ENCODE measurements at regions of chr19 and their contacts with region 1.

Region 1: DNA sequence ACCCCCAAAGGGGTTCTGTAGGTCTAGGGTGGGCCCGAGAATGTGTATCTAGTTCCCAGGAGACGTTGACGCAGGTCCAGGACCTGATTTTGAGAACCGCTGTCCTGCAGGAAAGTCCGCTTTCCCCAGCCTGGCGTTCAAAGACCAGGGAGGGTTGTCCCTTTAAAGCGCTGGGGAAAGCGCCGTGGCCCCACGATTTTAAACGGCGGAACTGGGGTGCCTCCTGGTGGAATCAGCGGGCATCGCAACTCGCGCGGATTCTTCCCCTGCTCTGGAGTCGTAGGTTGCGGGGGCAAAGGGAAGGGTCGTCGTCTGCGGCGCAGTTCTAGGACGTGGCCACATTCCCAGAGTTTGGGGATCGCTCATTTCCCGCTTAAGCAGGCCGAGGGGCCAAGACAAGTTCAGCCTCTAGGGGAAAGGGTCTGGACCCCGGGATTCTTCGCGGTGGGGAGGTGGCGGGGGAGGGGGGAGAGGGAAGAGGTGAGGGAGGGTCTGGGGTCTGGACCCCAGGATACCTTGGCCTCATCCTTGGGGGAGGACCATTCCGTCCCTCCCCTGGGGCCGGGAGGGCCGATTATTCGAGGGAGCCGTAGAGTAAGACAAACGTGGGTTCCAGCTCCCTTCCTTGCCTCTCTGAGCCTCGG is 7.7 kb downstream of the PNMA8B start:
- DNase-seq: peak; percentile 43 to 54 (median 44)
- H3K4me3 ChIP-seq: no peak overlapping the region
- H3K4me3 Mint-ChIP-seq: peak overlapping the region in 1 of 2 donors; percentile 94
- H3K27ac ChIP-seq: no peak overlapping the region
- H3K27ac Mint-ChIP-seq: no peak overlapping the region
- H3K4me1 ChIP-seq: peaks cover 28 to 45% of the 10 kb centered on the region in 2 donors
- H3K4me1 Mint-ChIP-seq: peaks cover 36% of the 10 kb centered on the region
- H3K27me3 ChIP-seq: peaks cover 25 to 59% of the 10 kb centered on the region in 2 donors
- H3K27me3 Mint-ChIP-seq: peaks cover 59 to 81% (median 73%) of the 10 kb centered on the region in 3 donors
- CTCF ChIP-seq: peak; percentile 89

Region 2: GRCh38 chr19:46283771-46284170 is 204.2 kb before region 1 on chr19:
- intact Hi-C with region 1: loop called (anchors 5 kb)
- DNase-seq: no peak
- H3K4me3 ChIP-seq: no peak overlapping the region
- H3K4me3 Mint-ChIP-seq: no peak overlapping the region
- H3K27ac ChIP-seq: no peak overlapping the region
- H3K27ac Mint-ChIP-seq: no peak overlapping the region
- H3K4me1 ChIP-seq: no peaks in the 10 kb centered on the region
- H3K4me1 Mint-ChIP-seq: no peaks in the 10 kb centered on the region
- H3K27me3 ChIP-seq: no peaks in the 10 kb centered on the region
- H3K27me3 Mint-ChIP-seq: peaks cover 0 to 11% (median 4%) of the 10 kb centered on the region in 3 donors
- CTCF ChIP-seq: no peak

Region 3: DNA sequence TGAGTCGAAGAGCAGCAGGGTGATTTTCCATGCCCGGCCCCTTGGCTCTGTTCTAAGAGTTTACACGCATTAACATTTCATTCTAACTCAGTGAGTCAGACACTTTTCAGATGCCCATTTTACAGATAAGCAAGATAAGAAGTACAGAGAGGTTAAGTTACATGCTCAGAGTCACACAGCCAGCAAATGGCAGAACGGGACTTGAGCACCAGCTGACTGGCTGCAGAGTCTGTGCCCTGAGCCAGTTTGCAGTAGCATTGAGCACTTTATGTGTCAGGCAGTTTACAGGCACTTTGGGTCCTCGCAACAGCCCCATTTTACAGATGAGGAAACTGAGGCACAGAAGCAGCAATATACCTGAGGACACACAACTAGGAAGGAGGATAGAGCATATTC is 93.5 kb before region 1 on chr19:
- intact Hi-C with region 1: loop called (anchors 2 to 5 kb)
- DNase-seq: no peak
- H3K4me3 ChIP-seq: no peak overlapping the region
- H3K4me3 Mint-ChIP-seq: no peak overlapping the region
- H3K27ac ChIP-seq: no peak overlapping the region
- H3K27ac Mint-ChIP-seq: no peak overlapping the region
- H3K4me1 ChIP-seq: no peaks in the 10 kb centered on the region
- H3K4me1 Mint-ChIP-seq: no peaks in the 10 kb centered on the region
- H3K27me3 ChIP-seq: no peaks in the 10 kb centered on the region
- H3K27me3 Mint-ChIP-seq: peaks cover 3 to 18% (median 6%) of the 10 kb centered on the region in 3 donors
- CTCF ChIP-seq: no peak

Region 4: GRCh38 chr19:46404055-46404752 is 83.7 kb before region 1 on chr19:
- intact Hi-C with region 1: loop called in 1 of 2 experiments (anchors 5 kb)
- DNase-seq: peak in 2 of 3 donors; percentile 20 to 23
- H3K4me3 ChIP-seq: peak overlapping the region in 1 of 3 experiments; percentile 61
- H3K4me3 Mint-ChIP-seq: peak overlapping the region; percentile 56 to 91
- H3K27ac ChIP-seq: no peak overlapping the region
- H3K27ac Mint-ChIP-seq: peak overlapping the region in 3 of 7 donors; percentile 50 to 69 (median 68)
- H3K4me1 ChIP-seq: peaks cover 14 to 15% of the 10 kb centered on the region in 2 donors
- H3K4me1 Mint-ChIP-seq: peaks cover 19% of the 10 kb centered on the region
- H3K27me3 ChIP-seq: peaks cover 9 to 56% of the 10 kb centered on the region in 2 donors
- H3K27me3 Mint-ChIP-seq: peaks cover 69 to 83% (median 71%) of the 10 kb centered on the region in 3 donors
- CTCF ChIP-seq: peak; percentile 1

Measured in CD14-positive monocyte (primary cell).